Activated B cell treated with CpG ODN at 0.5 μM for 24 hours (primary cell): ENCODE measurements at regions of chr4 and their contacts with region 1.

Region 1: GRCh38 chr4:163638909-163639308 is 144.4 kb downstream of the TMA16 start:
- DNase-seq: no peak
- ATAC-seq: no peak
- H3K4me3 Mint-ChIP-seq: no peak overlapping the region
- H3K27ac Mint-ChIP-seq: no peak overlapping the region
- H3K4me1 Mint-ChIP-seq: peaks cover 6% of the 10 kb centered on the region
- H3K27me3 Mint-ChIP-seq: no peaks in the 10 kb centered on the region
- CTCF ChIP-seq: no peak

Region 2: GRCh38 chr4:163269869-163270268 is 369.0 kb before region 1 on chr4:
- CTCF ChIA-PET with region 1: no interaction called
- POLR2A ChIA-PET with region 1: no interaction called
- intact Hi-C with region 1: no loop called
- DNase-seq: no peak
- ATAC-seq: no peak
- H3K4me3 Mint-ChIP-seq: no peak overlapping the region
- H3K27ac Mint-ChIP-seq: no peak overlapping the region
- H3K4me1 Mint-ChIP-seq: no peaks in the 10 kb centered on the region
- H3K27me3 Mint-ChIP-seq: peaks cover 4% of the 10 kb centered on the region
- CTCF ChIP-seq: no peak

Region 3: DNA sequence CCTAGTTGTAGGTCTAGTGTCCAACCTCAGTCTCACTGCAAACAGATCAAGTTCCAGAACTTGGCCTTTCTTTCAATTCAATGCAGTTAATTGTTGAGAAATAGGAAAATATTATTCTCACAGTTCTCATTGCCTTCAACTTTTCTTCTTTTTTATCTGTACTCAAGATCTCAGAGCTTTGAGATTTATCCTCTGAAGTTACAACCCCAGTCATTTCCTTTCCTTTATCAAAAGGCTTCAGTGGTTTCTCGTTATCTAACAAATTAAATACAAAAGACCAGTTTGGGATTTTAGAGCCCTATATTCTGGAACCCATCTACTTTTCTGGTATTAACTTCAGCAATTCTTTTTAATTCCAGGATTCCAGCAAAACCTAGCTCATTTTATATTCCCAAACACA is 14.2 kb before region 1 on chr4:
- CTCF ChIA-PET with region 1: no interaction called
- POLR2A ChIA-PET with region 1: no interaction called
- intact Hi-C with region 1: loop called (anchors 2 kb)
- DNase-seq: no peak
- ATAC-seq: no peak
- H3K4me3 Mint-ChIP-seq: no peak overlapping the region
- H3K27ac Mint-ChIP-seq: no peak overlapping the region
- H3K4me1 Mint-ChIP-seq: peaks cover 3% of the 10 kb centered on the region
- H3K27me3 Mint-ChIP-seq: no peaks in the 10 kb centered on the region
- CTCF ChIP-seq: no peak

Region 4: GRCh38 chr4:163654621-163655020 is 15.7 kb after region 1 on chr4:
- CTCF ChIA-PET with region 1: no interaction called
- POLR2A ChIA-PET with region 1: no interaction called
- intact Hi-C with region 1: loop called (anchors 2 kb)
- DNase-seq: no peak
- ATAC-seq: no peak
- H3K4me3 Mint-ChIP-seq: no peak overlapping the region
- H3K27ac Mint-ChIP-seq: no peak overlapping the region
- H3K4me1 Mint-ChIP-seq: peaks cover 24% of the 10 kb centered on the region
- H3K27me3 Mint-ChIP-seq: no peaks in the 10 kb centered on the region
- CTCF ChIP-seq: no peak